Psoas muscle (tissue), 8 donors: ENCODE measurements at regions of chr2 and their contacts with region 1.

Region 1: DNA sequence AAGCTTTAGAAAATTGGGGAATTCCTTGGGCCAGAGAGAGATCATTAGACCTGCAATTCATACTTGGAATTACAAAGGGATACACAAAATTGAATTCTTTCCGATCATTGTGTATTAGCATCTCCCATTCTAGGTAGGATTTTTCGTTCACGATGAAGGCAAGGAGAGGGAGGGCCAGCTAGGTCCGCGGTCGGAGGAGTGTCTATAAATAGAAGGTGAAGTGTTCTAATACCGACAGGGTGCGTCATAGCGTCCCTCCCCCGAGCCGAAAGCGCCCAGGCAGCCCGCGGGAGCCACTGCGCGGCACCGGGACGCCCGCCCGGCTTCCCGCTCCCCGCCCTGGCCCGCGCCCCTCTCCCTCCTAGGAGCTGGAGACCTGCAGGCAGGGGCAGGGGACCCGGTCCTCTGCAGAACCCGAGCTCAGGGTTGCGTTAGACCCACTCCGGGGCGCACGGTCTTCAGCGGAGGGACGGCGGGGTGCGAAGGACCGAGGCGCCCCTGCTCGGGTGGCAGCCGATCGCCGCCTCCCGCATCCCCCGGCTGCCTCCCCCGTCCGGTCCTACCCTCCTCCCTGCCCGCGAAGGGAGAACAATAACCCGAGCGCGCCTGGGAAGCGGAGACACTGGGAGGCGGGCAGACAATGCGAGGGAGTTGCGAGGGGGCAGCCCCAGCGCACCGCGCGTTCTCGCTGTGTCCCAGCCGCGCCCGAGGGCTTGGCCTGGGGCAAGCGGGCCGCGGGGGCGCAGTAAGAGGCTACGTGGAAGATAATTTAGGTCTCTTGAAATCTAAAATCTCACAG is 114.2 kb upstream of the SERTAD2 start:
- DNase-seq: peak; percentile 88 to 92
- ATAC-seq: peak; percentile 98
- H3K4me3 ChIP-seq: peak overlapping the region; percentile 80
- H3K27ac ChIP-seq: peak overlapping the region; percentile 98
- H3K4me1 ChIP-seq: peaks cover 3% of the 10 kb centered on the region
- H3K27me3 ChIP-seq: no peaks in the 10 kb centered on the region
- CTCF ChIP-seq: no peak

Region 2: GRCh38 chr2:64859312-64860212 is 91.7 kb after region 1 on chr2:
- intact Hi-C with region 1: loop called in 1 of 2 experiments (anchors 1 kb)
- DNase-seq: peak; percentile 92 to 95
- ATAC-seq: peak; percentile 84 to 89 (median 88)
- H3K4me3 ChIP-seq: peak overlapping the region; percentile 65
- H3K27ac ChIP-seq: peak overlapping the region; percentile 93
- H3K4me1 ChIP-seq: peaks cover 45% of the 10 kb centered on the region
- H3K27me3 ChIP-seq: no peaks in the 10 kb centered on the region
- CTCF ChIP-seq: peak; percentile 15